Panc1 (cell line): ENCODE measurements at regions of chrX and their contacts with region 1.

Region 1: DNA sequence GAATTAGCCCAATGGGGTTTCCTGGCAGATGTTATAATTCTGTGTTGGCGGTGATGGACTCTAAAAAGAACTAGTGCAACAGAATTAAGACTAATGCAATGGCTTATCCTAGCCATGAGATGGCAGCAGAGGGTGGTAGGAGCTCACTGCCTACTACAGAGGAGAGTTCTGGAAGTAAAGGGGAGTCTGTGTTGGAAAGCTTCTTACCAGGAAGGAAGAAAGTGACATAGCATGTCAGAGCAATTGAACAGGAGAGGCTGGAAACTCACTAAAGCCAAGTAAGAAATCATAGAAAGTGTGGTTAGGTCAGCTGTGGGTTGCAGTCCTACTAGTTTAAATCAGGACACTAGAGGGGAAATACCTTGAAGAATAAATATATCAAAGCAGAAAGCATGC is 6.3 kb upstream of the TRPC5OS start:
- DNase-seq: peak; percentile 27
- ATAC-seq: peak; percentile 78
- H3K4me3 ChIP-seq: no peak overlapping the region
- H3K27ac ChIP-seq: no peak overlapping the region
- H3K4me1 ChIP-seq: no peaks in the 10 kb centered on the region
- H3K27me3 ChIP-seq: no peaks in the 10 kb centered on the region
- CTCF ChIP-seq: peak; percentile 78

Region 2: DNA sequence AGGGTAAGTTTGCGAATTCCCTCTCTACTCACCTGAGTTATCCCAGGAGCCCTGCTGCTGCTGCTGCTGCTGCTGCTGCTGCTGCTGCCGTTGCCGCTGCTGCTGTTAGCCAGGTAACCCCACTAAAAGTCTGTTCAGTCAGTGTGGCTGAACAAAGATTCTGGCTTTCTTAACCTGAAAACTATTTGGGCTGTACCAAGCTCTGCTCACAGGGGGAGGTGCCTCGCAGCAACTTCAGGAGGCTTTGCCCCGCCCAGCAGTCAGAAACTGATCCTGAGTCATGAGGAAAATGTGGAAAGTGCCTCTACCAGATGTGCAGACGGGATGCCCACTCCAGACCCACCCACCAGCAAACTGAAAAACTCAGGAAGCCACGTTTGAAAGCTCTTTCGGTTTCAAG is 599.3 kb before region 1 on chrX and contains the start of gene CAPN6:
- CTCF ChIA-PET with region 1: no interaction called
- POLR2A ChIA-PET with region 1: no interaction called
- in situ Hi-C with region 1: no loop called
- intact Hi-C with region 1: no loop called
- DNase-seq: no peak
- ATAC-seq: no peak
- H3K4me3 ChIP-seq: no peak within 1 kb of the TSS
- H3K27ac ChIP-seq: no peak within 1 kb of the TSS
- H3K4me1 ChIP-seq: no peaks in the 10 kb centered on the region
- H3K27me3 ChIP-seq: 0 out of 2 replicates have a peak, but pooled peaks cover 2% of the 10 kb centered on the region
- CTCF ChIP-seq: no peak
- total RNA-seq, gene CAPN6: 0.08 TPM

Region 3: GRCh38 chrX:112043997-112044396 is 174.4 kb after region 1 on chrX:
- CTCF ChIA-PET with region 1: no interaction called
- POLR2A ChIA-PET with region 1: no interaction called
- in situ Hi-C with region 1: no loop called
- intact Hi-C with region 1: loop called (anchors 2 kb)
- DNase-seq: peak; percentile 7
- ATAC-seq: no peak
- H3K4me3 ChIP-seq: no peak overlapping the region
- H3K27ac ChIP-seq: no peak overlapping the region
- H3K4me1 ChIP-seq: no peaks in the 10 kb centered on the region
- H3K27me3 ChIP-seq: no peaks in the 10 kb centered on the region
- CTCF ChIP-seq: peak; percentile 39; the same call in 1 of the 2 replicates

Region 4: GRCh38 chrX:112642349-112642748 is 772.7 kb after region 1 on chrX:
- CTCF ChIA-PET with region 1: no interaction called
- POLR2A ChIA-PET with region 1: no interaction called
- in situ Hi-C with region 1: no loop called
- intact Hi-C with region 1: loop called (anchors 2 kb)
- DNase-seq: peak; percentile 47
- ATAC-seq: peak; percentile 84
- H3K4me3 ChIP-seq: no peak overlapping the region
- H3K27ac ChIP-seq: no peak overlapping the region
- H3K4me1 ChIP-seq: no peaks in the 10 kb centered on the region
- H3K27me3 ChIP-seq: no peaks in the 10 kb centered on the region
- CTCF ChIP-seq: peak; percentile 77